ENCODE measurements at regions of chr1 and their contacts with region 1.

Region 1: GRCh38 chr1:154669464-154670282 is 61.7 kb upstream of the ADAR start:
- DNase-seq: peak; percentile 88
- H3K4me3 ChIP-seq: no peak overlapping the region
- H3K27ac ChIP-seq: no peak overlapping the region
- H3K4me1 ChIP-seq: no peaks in the 10 kb centered on the region
- H3K27me3 ChIP-seq: peaks cover 0 to 4% (median 0%) of the 10 kb centered on the region in 3 donors
- CTCF ChIP-seq: peak; percentile 63 to 75 (median 66)
- EP300 ChIP-seq: no peak
- POLR2A ChIP-seq: no peak

Region 2: GRCh38 chr1:154736841-154737240 is 67.2 kb after region 1 on chr1:
- intact Hi-C with region 1: no loop called
- DNase-seq: no peak
- H3K4me3 ChIP-seq: no peak overlapping the region
- H3K27ac ChIP-seq: no peak overlapping the region
- H3K4me1 ChIP-seq: peaks cover 0 to 12% (median 6%) of the 10 kb centered on the region in 4 donors
- H3K27me3 ChIP-seq: no peaks in the 10 kb centered on the region
- CTCF ChIP-seq: no peak
- EP300 ChIP-seq: no peak
- POLR2A ChIP-seq: no peak

Region 3: DNA sequence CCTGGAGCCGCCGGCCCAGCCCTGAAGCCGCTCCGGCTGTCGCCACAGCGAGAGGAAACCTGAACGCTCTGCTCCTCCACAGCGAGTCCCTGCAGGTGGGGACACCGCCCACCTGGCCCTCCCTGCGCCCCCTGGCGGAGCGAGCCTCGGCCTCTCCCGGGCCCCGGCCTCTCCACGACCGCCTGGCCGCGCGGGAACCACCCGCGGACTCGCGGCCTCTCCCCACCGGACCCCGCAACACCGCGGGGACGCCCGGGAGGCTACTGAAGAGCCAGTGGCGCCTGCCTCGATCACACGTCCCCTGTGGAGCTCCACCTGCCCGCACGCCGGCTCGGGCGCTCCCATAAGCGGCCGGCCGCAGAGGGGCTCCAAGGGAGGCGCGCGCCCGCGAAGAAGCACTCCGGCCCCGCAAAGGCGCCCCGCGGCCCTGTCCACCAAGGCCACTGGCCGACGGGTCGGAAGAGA is 90.8 kb after region 1 on chr1:
- intact Hi-C with region 1: loop called (anchors 5 kb)
- DNase-seq: peak; percentile 68
- H3K4me3 ChIP-seq: peak overlapping the region in 3 of 4 donors; percentile 21 to 47 (median 37)
- H3K27ac ChIP-seq: no peak overlapping the region
- H3K4me1 ChIP-seq: peaks cover 0 to 10% (median 8%) of the 10 kb centered on the region in 4 donors
- H3K27me3 ChIP-seq: peaks cover 0 to 20% (median 8%) of the 10 kb centered on the region in 3 donors
- CTCF ChIP-seq: peak; percentile 23 to 74 (median 53)
- EP300 ChIP-seq: no peak
- POLR2A ChIP-seq: no peak

Region 4: DNA sequence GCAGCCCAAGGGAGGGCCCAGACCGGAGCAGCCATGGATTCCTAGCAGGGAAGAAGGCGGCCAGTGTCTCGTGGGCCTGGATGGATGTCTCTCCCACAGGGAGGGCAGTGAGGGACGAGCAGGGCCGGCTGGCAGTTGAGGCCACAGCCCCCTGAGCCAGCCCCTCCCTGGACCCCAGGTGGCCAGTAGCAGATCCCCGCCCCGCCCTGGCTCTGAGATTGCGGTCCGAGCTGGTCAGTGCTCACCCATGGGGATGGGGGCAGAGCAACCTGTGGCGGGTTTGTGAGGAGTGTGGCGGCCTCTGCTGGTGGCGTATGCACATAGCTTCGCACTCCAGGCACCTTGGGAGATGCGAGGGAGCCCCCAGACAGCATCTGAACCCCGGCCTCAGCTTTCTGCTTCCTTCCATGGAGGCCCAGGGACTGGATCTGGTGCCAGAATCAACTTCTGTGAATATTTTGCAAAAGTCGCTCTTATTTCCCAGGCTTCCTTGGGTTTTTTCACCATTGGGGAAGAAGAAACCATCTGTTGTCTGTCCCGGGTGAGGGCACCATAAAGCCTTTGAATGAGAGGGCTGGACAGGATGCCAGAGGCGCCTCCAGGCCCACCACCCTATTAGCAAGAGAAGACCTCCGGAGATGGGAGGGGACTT is 208.8 kb after region 1 on chr1:
- intact Hi-C with region 1: loop called (anchors 1 kb)
- DNase-seq: peak; percentile 89
- H3K4me3 ChIP-seq: no peak overlapping the region
- H3K27ac ChIP-seq: no peak overlapping the region
- H3K4me1 ChIP-seq: peaks cover 0 to 6% (median 0%) of the 10 kb centered on the region in 4 donors
- H3K27me3 ChIP-seq: peaks cover 0 to 4% (median 0%) of the 10 kb centered on the region in 3 donors
- CTCF ChIP-seq: peak; percentile 80 to 90 (median 84)
- EP300 ChIP-seq: no peak
- POLR2A ChIP-seq: no peak